ENCODE measurements at regions of chr2 and their contacts with region 1.

Region 1: DNA sequence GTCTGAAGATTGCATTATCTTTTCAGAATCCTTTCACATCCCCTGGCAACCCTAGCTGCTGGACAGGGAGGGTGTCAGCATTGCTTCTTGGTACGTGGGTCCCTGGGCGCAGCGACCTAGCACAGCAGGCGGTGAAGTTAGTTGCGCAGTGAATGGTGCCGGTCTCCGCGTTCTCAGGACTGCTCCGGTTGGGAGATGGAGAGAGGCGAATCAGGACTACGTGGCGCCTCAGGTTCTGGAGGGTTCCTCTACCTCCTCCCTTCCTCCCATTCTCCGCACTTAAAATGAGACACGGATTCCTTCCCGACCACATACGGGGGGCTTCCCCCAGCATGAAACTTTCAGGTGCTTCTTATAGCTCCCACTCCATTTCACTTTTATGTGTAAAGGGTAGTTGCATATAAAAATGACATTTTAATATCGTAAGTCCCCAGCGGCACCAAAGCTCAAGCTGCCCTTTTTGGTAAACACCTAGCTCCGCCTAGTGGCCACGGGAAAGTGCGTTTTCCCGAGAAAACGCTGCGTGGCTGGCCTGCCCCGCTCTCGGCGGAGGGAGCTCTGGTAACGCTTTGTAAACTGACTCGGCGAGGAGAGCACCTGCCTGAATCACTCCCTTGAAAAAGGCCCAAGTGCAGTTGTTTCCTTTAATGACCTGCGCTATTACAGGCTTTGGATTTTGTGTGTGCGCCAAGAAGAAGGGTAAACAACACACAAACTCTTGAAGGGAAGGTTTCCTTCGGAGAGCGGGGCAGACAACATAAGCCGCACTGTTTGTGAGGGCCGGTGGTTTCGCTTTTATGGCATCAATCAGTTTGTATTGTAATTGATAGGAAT is 32.9 kb upstream of the INHBB start:
- DNase-seq: peak; percentile 46 to 77 (median 67)
- ATAC-seq: peak; percentile 78
- H3K4me3 ChIP-seq: peak overlapping the region; percentile 49
- H3K4me3 Mint-ChIP-seq: peak overlapping the region; percentile 76 to 92 (median 86)
- H3K27ac ChIP-seq: peak overlapping the region; percentile 8
- H3K27ac Mint-ChIP-seq: peak overlapping the region; percentile 32 to 91 (median 67)
- H3K4me1 ChIP-seq: peaks cover 3 to 19% of the 10 kb centered on the region in 2 donors
- H3K4me1 Mint-ChIP-seq: peaks cover 7 to 45% (median 34%) of the 10 kb centered on the region in 7 donors
- H3K27me3 ChIP-seq: no peaks in the 10 kb centered on the region
- H3K27me3 Mint-ChIP-seq: peaks cover 0 to 4% (median 0%) of the 10 kb centered on the region in 5 donors

Region 2: GRCh38 chr2:119702918-119703401 is 610.1 kb before region 1 on chr2:
- CTCF ChIA-PET with region 1: interaction called, 3 read pairs
- POLR2A ChIA-PET with region 1: no interaction called
- intact Hi-C with region 1: loop called (anchors 1 to 2 kb)
- DNase-seq: peak; percentile 26 to 69 (median 53)
- ATAC-seq: peak; percentile 92
- H3K4me3 ChIP-seq: peak overlapping the region; percentile 16
- H3K4me3 Mint-ChIP-seq: no peak overlapping the region
- H3K27ac ChIP-seq: no peak overlapping the region
- H3K27ac Mint-ChIP-seq: peak overlapping the region in 2 of 9 donors; percentile 6 to 56
- H3K4me1 ChIP-seq: peaks cover 6 to 9% of the 10 kb centered on the region in 2 donors
- H3K4me1 Mint-ChIP-seq: peaks cover 0 to 23% (median 13%) of the 10 kb centered on the region in 7 donors
- H3K27me3 ChIP-seq: no peaks in the 10 kb centered on the region
- H3K27me3 Mint-ChIP-seq: peaks cover 0 to 4% (median 0%) of the 10 kb centered on the region in 5 donors

Region 3: GRCh38 chr2:119826370-119826961 is 486.6 kb before region 1 on chr2:
- CTCF ChIA-PET with region 1: no interaction called
- POLR2A ChIA-PET with region 1: no interaction called
- intact Hi-C with region 1: loop called (anchors 5 kb)
- DNase-seq: peak in 7 of 9 donors; percentile 10 to 53 (median 28)
- ATAC-seq: peak; percentile 82
- H3K4me3 ChIP-seq: no peak overlapping the region
- H3K4me3 Mint-ChIP-seq: no peak overlapping the region
- H3K27ac ChIP-seq: no peak overlapping the region
- H3K27ac Mint-ChIP-seq: peak overlapping the region in 4 of 9 donors; percentile 32 to 67 (median 45)
- H3K4me1 ChIP-seq: peaks cover 0 to 8% of the 10 kb centered on the region in 2 donors
- H3K4me1 Mint-ChIP-seq: peaks cover 22 to 76% (median 59%) of the 10 kb centered on the region in 7 donors
- H3K27me3 ChIP-seq: no peaks in the 10 kb centered on the region
- H3K27me3 Mint-ChIP-seq: no peaks in the 10 kb centered on the region

Region 4: DNA sequence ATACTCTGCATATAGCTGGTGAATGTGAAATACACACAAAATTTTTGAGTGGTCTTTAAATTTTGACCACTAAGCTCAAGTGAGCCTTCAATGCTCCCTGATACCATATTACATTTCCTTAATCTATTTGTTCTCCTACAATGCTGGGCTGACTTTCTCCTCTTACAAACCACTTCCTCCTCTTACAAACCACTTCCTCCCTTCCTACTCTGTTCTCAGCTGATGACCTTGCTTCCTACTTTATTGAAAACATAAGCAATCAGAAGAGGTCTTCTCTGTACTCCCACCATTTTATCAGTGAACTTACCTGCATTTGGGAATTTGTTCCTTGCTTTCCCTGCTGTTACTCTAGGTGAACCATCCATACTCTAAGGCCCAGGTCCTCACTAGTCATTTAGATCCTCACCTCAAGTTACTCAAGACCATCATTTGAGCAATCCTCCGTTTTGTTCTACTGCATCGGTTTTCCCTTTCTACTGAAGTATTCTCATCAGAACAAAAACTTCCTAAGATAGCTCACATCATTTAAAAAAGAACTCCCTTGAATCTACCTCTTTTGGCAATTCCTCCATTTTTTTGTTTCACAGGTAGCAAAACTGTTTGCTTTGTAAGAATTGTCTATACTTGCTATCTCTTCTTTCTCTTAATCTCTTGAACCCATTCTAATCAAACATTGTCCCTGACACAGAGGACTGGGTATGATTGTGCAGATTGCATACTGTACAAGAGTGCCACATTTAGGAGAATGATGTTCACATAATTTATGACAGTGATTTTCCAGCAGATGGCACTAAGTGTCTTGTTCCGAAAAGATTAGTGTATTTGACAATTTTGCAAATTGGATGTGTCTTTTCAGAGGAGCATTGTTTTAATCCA is 203.7 kb before region 1 on chr2:
- CTCF ChIA-PET with region 1: interaction called, 36 read pairs
- POLR2A ChIA-PET with region 1: interaction called, 3 read pairs
- intact Hi-C with region 1: loop called (anchors 1 kb)
- DNase-seq: peak in 7 of 9 donors; percentile 14 to 73 (median 67)
- ATAC-seq: peak; percentile 80
- H3K4me3 ChIP-seq: peak overlapping the region; percentile 34
- H3K4me3 Mint-ChIP-seq: peak overlapping the region; percentile 30 to 87 (median 70)
- H3K27ac ChIP-seq: peak overlapping the region; percentile 39
- H3K27ac Mint-ChIP-seq: peak overlapping the region; percentile 10 to 90 (median 72)
- H3K4me1 ChIP-seq: peaks cover 17 to 21% of the 10 kb centered on the region in 2 donors
- H3K4me1 Mint-ChIP-seq: peaks cover 19 to 44% (median 36%) of the 10 kb centered on the region in 7 donors
- H3K27me3 ChIP-seq: no peaks in the 10 kb centered on the region
- H3K27me3 Mint-ChIP-seq: peaks cover 0 to 33% (median 0%) of the 10 kb centered on the region in 5 donors

Region 5: GRCh38 chr2:120223034-120223912 is 89.8 kb before region 1 on chr2 and contains the start of gene TMEM185B:
- CTCF ChIA-PET with region 1: interaction called, 7 read pairs
- POLR2A ChIA-PET with region 1: interaction called, 4 read pairs
- intact Hi-C with region 1: loop called (anchors 1 to 2 kb)
- DNase-seq: peak; percentile 83 to 96 (median 90)
- ATAC-seq: peak; percentile 97
- H3K4me3 ChIP-seq: peak within 1 kb of the TSS; percentile 74
- H3K4me3 Mint-ChIP-seq: peak within 1 kb of the TSS; percentile 83 to 91 (median 88)
- H3K27ac ChIP-seq: peak within 1 kb of the TSS; percentile 94
- H3K27ac Mint-ChIP-seq: peak within 1 kb of the TSS; percentile 85 to 92 (median 91)
- H3K4me1 ChIP-seq: peaks cover 20 to 23% of the 10 kb centered on the region in 2 donors
- H3K4me1 Mint-ChIP-seq: peaks cover 34 to 67% (median 56%) of the 10 kb centered on the region in 7 donors
- H3K27me3 ChIP-seq: no peaks in the 10 kb centered on the region
- H3K27me3 Mint-ChIP-seq: no peaks in the 10 kb centered on the region
- total RNA-seq, gene TMEM185B: 14.9 to 36.8 (median 19.5) TPM

Region 6: GRCh38 chr2:120252225-120253021 is 60.7 kb before region 1 on chr2 and contains the start of gene RALB:
- CTCF ChIA-PET with region 1: interaction called, 3 read pairs
- POLR2A ChIA-PET with region 1: interaction called, 4 read pairs
- intact Hi-C with region 1: loop called (anchors 1 kb)
- DNase-seq: peak; percentile 95 to 99 (median 97)
- ATAC-seq: peak; percentile 95
- H3K4me3 ChIP-seq: peak within 1 kb of the TSS; percentile 81
- H3K4me3 Mint-ChIP-seq: peak within 1 kb of the TSS; percentile 94 to 100 (median 98)
- H3K27ac ChIP-seq: peak within 1 kb of the TSS; percentile 76
- H3K27ac Mint-ChIP-seq: peak within 1 kb of the TSS; percentile 87 to 98 (median 95)
- H3K4me1 ChIP-seq: peaks cover 16% of the 10 kb centered on the region in 2 donors
- H3K4me1 Mint-ChIP-seq: peaks cover 29 to 72% (median 51%) of the 10 kb centered on the region in 7 donors
- H3K27me3 ChIP-seq: no peaks in the 10 kb centered on the region
- H3K27me3 Mint-ChIP-seq: peaks cover 0 to 9% (median 4%) of the 10 kb centered on the region in 5 donors
- total RNA-seq, gene RALB: 8.7 to 119 (median 11.6) TPM

Region 7: DNA sequence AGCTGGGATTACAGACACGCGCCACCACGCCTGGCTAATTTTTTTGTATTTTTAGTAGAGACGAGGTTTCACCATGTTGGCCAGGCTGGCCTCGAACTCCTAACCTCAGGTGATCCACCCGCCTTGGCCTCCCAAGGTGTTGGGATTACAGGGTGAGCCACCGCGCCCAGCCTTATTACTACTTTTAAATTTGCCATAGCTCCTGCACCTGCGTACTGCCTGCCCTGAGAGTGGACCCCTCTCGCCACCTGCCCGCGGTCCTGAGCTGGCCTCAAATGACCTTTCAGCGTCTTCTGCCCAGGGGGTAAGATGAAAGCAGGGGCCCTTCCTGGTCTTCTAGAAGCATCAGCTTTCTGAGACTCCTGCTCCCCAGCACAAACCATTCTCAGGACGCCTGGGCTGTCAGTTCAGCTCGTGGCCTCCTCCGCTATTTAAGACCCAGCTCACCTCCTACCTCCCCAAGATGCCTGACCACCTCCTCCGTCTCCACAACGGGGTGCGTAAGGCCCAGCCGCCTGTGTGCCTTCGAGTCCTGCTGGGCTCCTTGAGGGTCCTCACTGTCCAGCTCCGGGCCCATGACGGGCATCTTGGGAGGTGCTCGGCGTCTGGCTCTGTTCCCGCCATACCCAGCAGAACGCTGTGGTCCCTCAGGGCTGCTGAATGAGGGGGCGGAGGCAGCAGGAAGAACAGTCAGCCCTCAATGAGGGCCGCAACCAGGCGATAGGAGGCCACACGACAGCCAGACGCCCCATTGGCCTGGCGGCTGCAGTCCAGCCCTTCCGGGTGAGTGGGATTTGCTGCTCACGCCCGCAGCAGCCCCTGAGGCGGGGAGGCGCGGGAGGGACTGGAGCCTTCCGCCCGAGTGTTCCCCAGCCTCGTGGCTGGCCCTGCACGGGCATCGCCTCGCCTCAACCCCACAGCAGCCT is 705.3 kb after region 1 on chr2:
- CTCF ChIA-PET with region 1: no interaction called
- POLR2A ChIA-PET with region 1: no interaction called
- intact Hi-C with region 1: no loop called
- DNase-seq: no peak
- ATAC-seq: no peak
- H3K4me3 ChIP-seq: no peak overlapping the region
- H3K4me3 Mint-ChIP-seq: no peak overlapping the region
- H3K27ac ChIP-seq: no peak overlapping the region
- H3K27ac Mint-ChIP-seq: no peak overlapping the region
- H3K4me1 ChIP-seq: no peaks in the 10 kb centered on the region
- H3K4me1 Mint-ChIP-seq: no peaks in the 10 kb centered on the region
- H3K27me3 ChIP-seq: no peaks in the 10 kb centered on the region
- H3K27me3 Mint-ChIP-seq: peaks cover 2 to 28% (median 15%) of the 10 kb centered on the region in 5 donors

Measured in naive thymus-derived CD4-positive, alpha-beta T cell (primary cell).